Calu3 (cell line): ENCODE measurements at regions of chr11 and their contacts with region 1.

Region 1: GRCh38 chr11:40763046-40763445 is 696.4 kb downstream of the LRRC4C start:
- DNase-seq: no peak
- H3K4me3 Mint-ChIP-seq: no peak overlapping the region
- H3K27ac Mint-ChIP-seq: no peak overlapping the region
- H3K4me1 Mint-ChIP-seq: no peaks in the 10 kb centered on the region
- H3K27me3 Mint-ChIP-seq: no peaks in the 10 kb centered on the region
- CTCF ChIP-seq: no peak

Region 2: GRCh38 chr11:40797981-40798380 is 34.9 kb after region 1 on chr11:
- CTCF ChIA-PET with region 1: no interaction called
- intact Hi-C with region 1: loop called (anchors 2 kb)
- DNase-seq: no peak
- H3K4me3 Mint-ChIP-seq: no peak overlapping the region
- H3K27ac Mint-ChIP-seq: no peak overlapping the region
- H3K4me1 Mint-ChIP-seq: no peaks in the 10 kb centered on the region
- H3K27me3 Mint-ChIP-seq: no peaks in the 10 kb centered on the region
- CTCF ChIP-seq: no peak